Heart right ventricle (tissue), 16 donors: ENCODE measurements at regions of chr6 and their contacts with region 1.

Region 1: GRCh38 chr6:16770701-16771569 is 9.7 kb upstream of the ATXN1 start:
- DNase-seq: peak; percentile 76 to 83
- ATAC-seq: peak; percentile 70 to 92 (median 88)
- H3K4me3 ChIP-seq: no peak overlapping the region
- H3K27ac ChIP-seq: peak overlapping the region in 3 of 10 donors; percentile 20 to 61 (median 47)
- H3K4me1 ChIP-seq: peaks cover 0 to 46% (median 32%) of the 10 kb centered on the region in 9 donors
- H3K27me3 ChIP-seq: no peaks in the 10 kb centered on the region
- CTCF ChIP-seq: peak; percentile 91 to 98 (median 95)

Region 2: GRCh38 chr6:16338577-16339262 is 432.2 kb before region 1 on chr6:
- intact Hi-C with region 1: loop called in 3 of 10 experiments (anchors 5 to 10 kb)
- DNase-seq: peak; percentile 51 to 54
- ATAC-seq: peak in 6 of 8 donors; percentile 19 to 53 (median 38)
- H3K4me3 ChIP-seq: no peak overlapping the region
- H3K27ac ChIP-seq: peak overlapping the region in 2 of 10 donors; percentile 23 to 31
- H3K4me1 ChIP-seq: peaks cover 11 to 71% (median 42%) of the 10 kb centered on the region in 9 donors
- H3K27me3 ChIP-seq: no peaks in the 10 kb centered on the region
- CTCF ChIP-seq: peak; percentile 11 to 64 (median 48)

Region 3: DNA sequence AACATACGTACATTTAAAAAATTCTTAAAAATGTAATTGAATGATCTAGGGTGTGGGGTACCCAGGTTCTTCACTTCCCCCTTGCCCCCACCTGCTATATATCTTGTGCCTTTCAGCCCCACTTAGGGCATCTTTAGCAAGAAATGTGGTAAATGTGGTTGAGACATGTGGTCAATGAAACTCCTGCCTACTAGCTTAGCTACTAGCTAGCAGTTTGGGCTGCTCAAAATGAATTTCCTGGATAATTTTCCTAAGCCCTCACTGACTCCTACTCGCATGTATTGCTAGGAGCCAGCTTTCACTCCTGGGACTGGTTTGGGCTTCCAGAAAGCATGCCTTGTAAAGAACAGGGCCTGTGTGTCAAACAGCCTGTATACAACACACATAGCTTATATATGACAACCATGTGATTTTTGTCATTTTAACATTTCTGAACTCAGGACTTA is 266.9 kb before region 1 on chr6:
- intact Hi-C with region 1: loop called in 1 of 10 experiments (anchors 5 kb)
- DNase-seq: no peak
- ATAC-seq: no peak
- H3K4me3 ChIP-seq: no peak overlapping the region
- H3K27ac ChIP-seq: peak overlapping the region in 1 of 10 donors; percentile 9
- H3K4me1 ChIP-seq: peaks cover 0 to 32% (median 18%) of the 10 kb centered on the region in 9 donors
- H3K27me3 ChIP-seq: no peaks in the 10 kb centered on the region
- CTCF ChIP-seq: no peak

Region 4: DNA sequence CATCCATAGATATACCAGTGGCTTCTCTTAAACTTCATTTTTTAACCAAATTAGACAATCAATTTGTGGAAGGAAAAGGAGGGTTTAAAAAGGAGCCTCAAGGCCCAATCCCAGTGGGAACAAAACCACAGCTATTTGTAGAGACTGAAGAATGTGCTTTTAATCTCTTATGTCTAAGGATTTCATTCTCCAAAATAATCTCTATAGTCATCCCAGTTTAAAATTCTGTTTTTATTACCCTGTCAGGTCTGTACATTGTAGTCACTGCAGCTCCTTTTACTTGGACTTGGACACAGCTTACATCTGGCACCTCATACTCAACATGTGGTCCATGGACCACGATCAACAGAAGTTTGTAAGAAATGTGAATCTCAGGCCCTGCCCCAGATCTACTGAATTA is 178.8 kb after region 1 on chr6:
- intact Hi-C with region 1: no loop called
- DNase-seq: no peak
- ATAC-seq: no peak
- H3K4me3 ChIP-seq: no peak overlapping the region
- H3K27ac ChIP-seq: no peak overlapping the region
- H3K4me1 ChIP-seq: peaks cover 0 to 27% (median 6%) of the 10 kb centered on the region in 9 donors
- H3K27me3 ChIP-seq: no peaks in the 10 kb centered on the region
- CTCF ChIP-seq: no peak

Region 5: DNA sequence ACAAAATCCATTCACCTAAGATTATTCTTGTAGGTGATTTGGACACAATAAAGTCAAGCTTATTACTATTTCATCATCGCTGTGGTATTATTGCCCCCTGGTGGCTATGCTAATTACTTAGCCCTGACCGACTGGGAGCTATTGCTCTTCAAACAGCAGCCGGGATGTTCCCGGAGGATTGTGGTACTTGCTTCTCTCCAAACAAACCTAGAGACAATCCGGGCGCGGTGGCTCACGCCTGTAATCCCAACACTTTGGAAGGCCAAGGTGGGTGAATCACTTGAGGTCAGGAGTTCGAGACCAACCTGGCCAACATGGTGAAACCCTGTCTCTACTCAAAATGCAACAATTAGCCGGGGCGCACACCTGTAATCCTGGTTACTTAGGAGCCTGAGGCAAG is 315.5 kb after region 1 on chr6:
- intact Hi-C with region 1: loop called in 7 of 10 experiments (anchors 5 to 10 kb)
- DNase-seq: peak in 1 of 2 donors; percentile 64
- ATAC-seq: peak; percentile 49 to 86 (median 74)
- H3K4me3 ChIP-seq: no peak overlapping the region
- H3K27ac ChIP-seq: no peak overlapping the region
- H3K4me1 ChIP-seq: peaks cover 0 to 11% (median 0%) of the 10 kb centered on the region in 9 donors
- H3K27me3 ChIP-seq: peaks cover 0 to 9% (median 0%) of the 10 kb centered on the region in 7 donors
- CTCF ChIP-seq: peak; percentile 41 to 78 (median 71)